Mammary epithelial cell (primary cell): ENCODE measurements at regions of chr9 and their contacts with region 1.

Region 1: DNA sequence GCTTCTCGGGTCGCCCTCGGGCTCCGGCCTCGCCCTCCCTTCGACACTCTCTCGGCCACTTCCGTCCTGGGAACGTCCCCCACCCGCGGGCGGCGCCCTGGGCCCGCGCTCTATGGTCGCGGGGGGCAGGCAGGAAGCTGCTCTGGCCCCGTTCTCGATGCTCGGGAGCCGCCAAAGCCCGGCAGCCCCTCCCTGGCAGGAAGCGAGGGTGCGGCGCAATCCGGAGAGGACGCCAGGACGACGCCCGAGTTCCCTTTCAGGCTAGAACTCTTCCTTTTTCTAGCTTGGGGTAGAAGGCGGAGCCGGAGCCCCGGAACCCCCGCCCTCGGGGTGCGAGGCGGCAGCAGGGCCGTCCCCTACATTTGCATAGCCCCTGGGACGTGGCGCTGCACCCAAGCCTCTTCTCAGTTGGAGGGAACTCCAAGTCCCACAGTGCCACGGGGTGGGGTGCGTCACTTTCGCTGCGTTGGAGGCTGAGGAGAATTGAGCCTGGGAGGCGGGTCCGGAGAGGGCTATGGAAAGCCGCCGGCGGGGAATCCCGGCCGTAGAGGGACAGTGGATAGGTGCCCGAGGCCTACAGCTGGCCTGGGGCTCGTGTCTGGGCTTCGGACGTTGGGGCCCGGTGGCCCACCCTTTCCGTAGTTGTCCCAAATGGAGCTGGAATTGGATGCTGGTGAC is at the starts of genes CREB3 and TLN1:
- DNase-seq: peak; percentile 99
- H3K4me3 ChIP-seq: peak within 1 kb of the TSS; percentile 72 to 88 (median 80)
- H3K27ac ChIP-seq: peak within 1 kb of the TSS; percentile 74
- H3K4me1 ChIP-seq: peaks cover 52% of the 10 kb centered on the region
- H3K27me3 ChIP-seq: no peaks in the 10 kb centered on the region
- CTCF ChIP-seq: no peak
- total RNA-seq, gene CREB3: 45.4 to 60.8 TPM
- total RNA-seq, gene TLN1: 202 to 213 TPM

Region 2: GRCh38 chr9:35646533-35647265 is 85.6 kb before region 1 on chr9:
- CTCF ChIA-PET with region 1: interaction called, 7 read pairs
- dilution Hi-C with region 1: no loop called
- in situ Hi-C with region 1: no loop called
- intact Hi-C with region 1: loop called (anchors 1 kb)
- DNase-seq: peak; percentile 85
- H3K4me3 ChIP-seq: peak overlapping the region; percentile 62 to 95 (median 72)
- H3K27ac ChIP-seq: peak overlapping the region; percentile 85
- H3K4me1 ChIP-seq: peaks cover 6% of the 10 kb centered on the region
- H3K27me3 ChIP-seq: no peaks in the 10 kb centered on the region
- CTCF ChIP-seq: peak; percentile 77 to 98

Region 3: DNA sequence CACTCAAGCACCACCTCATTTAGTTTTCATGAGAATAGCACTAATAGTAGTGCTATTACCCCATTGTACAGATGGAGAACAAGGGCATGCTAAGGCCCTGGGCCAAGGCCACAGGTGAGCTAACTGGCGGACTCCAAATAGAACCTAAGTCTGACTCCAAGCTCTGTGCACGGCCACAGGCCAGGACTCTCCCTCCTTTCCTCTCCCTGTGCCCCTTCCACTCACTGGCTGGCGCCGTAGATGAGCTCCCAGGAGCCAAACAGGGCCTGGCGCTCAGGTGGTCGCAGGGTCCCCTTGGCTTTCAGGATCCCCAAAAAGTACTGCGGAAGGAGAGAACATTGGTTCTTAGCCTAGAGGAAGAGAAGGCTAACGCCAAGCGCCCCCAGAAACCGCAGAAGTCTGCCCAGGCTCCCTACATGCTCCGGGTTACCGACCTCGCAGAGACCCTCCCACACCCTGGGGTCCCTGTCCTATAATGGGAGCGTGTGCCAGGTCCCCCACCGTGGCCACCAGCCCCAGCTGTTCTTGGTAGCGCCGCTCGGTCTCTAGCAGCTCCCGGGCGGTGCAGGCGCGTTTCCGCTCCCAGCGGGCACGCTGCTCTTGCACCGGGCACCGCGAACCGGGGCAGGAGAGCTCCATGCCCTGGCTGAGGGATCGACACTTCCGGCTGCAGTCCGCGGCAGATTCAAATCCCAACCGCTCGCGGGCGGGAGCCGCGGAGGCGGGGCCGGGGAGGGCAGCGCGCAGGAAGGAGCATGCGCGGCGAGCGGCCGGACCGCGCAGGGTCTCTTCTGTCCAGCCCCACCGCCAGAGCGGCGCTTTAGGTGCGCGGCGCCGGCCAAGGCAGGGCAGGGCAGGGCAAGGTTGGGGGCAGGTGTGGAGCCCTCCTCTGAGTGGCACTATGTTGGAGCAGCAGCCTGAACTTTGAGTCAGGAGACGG is 67.5 kb before region 1 on chr9 and contains the start of gene ARHGEF39:
- CTCF ChIA-PET with region 1: interaction called, 10 read pairs
- dilution Hi-C with region 1: no loop called
- in situ Hi-C with region 1: no loop called
- intact Hi-C with region 1: loop called (anchors 2 kb)
- DNase-seq: peak; percentile 79
- H3K4me3 ChIP-seq: peak within 1 kb of the TSS; percentile 32 to 77 (median 63)
- H3K27ac ChIP-seq: peak within 1 kb of the TSS; percentile 50
- H3K4me1 ChIP-seq: peaks cover 39% of the 10 kb centered on the region
- H3K27me3 ChIP-seq: no peaks in the 10 kb centered on the region
- CTCF ChIP-seq: peak in 1 of 2 donors; percentile 16
- total RNA-seq, gene ARHGEF39: 0.33 to 5.7 TPM

Region 4: GRCh38 chr9:35718721-35719511 is 13.3 kb before region 1 on chr9:
- CTCF ChIA-PET with region 1: no interaction called
- dilution Hi-C with region 1: no loop called
- in situ Hi-C with region 1: no loop called
- intact Hi-C with region 1: loop called (anchors 1 kb)
- DNase-seq: peak; percentile 37
- H3K4me3 ChIP-seq: no peak overlapping the region
- H3K27ac ChIP-seq: no peak overlapping the region
- H3K4me1 ChIP-seq: no peaks in the 10 kb centered on the region
- H3K27me3 ChIP-seq: no peaks in the 10 kb centered on the region
- CTCF ChIP-seq: no peak

Region 5: GRCh38 chr9:35756275-35757225 is 24.3 kb after region 1 on chr9:
- CTCF ChIA-PET with region 1: no interaction called
- dilution Hi-C with region 1: loop called (anchors 5 kb)
- in situ Hi-C with region 1: no loop called
- intact Hi-C with region 1: no loop called
- DNase-seq: peak; percentile 23
- H3K4me3 ChIP-seq: peak overlapping the region; percentile 55 to 70 (median 64)
- H3K27ac ChIP-seq: no peak overlapping the region
- H3K4me1 ChIP-seq: peaks cover 24% of the 10 kb centered on the region
- H3K27me3 ChIP-seq: no peaks in the 10 kb centered on the region
- CTCF ChIP-seq: peak; percentile 48 to 77

Region 6: GRCh38 chr9:35790385-35791296 is 58.4 kb after region 1 on chr9:
- CTCF ChIA-PET with region 1: interaction called, 3 read pairs
- dilution Hi-C with region 1: no loop called
- in situ Hi-C with region 1: no loop called
- intact Hi-C with region 1: loop called (anchors 1 kb)
- DNase-seq: peak; percentile 60
- H3K4me3 ChIP-seq: no peak overlapping the region
- H3K27ac ChIP-seq: no peak overlapping the region
- H3K4me1 ChIP-seq: peaks cover 11% of the 10 kb centered on the region
- H3K27me3 ChIP-seq: no peaks in the 10 kb centered on the region
- CTCF ChIP-seq: peak; percentile 83

Region 7: DNA sequence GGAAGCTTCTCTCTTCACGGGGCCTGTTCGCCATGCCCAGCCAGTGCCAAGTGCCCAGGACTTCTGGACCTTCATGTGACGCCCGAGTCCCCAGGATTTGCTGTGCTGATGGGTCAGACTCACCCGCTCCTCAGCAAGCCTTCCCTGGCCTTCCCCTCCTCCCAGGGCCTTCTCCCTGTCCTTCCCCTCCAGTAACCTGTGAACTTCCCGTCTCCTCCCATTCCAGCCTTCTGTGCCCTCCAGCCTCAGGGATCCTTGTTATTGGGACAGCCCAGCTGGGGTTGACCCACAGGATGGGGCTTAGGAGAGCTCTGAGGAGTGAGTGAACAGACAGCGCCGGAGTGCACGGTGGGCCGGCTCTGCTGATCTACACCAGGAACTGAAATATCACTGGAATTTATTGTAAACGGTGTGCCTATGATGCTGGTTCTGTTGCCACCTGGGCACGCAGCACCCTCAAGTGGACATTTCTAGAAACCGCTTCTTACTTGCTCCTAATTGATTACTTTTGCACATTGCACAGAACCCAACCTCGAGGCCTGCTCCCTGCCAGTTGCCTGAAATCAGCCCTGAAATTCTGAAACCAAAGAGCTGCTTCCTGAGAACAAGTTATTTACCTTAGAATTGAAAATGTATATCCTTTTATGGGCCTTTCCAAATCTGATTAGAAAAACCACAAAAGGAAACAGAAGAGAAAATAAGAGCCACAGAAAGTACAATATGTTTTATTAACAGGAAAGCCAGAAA is 178.5 kb after region 1 on chr9:
- CTCF ChIA-PET with region 1: no interaction called
- dilution Hi-C with region 1: no loop called
- in situ Hi-C with region 1: no loop called
- intact Hi-C with region 1: loop called (anchors 5 kb)
- DNase-seq: peak; percentile 56
- H3K4me3 ChIP-seq: no peak overlapping the region
- H3K27ac ChIP-seq: no peak overlapping the region
- H3K4me1 ChIP-seq: peaks cover 50% of the 10 kb centered on the region
- H3K27me3 ChIP-seq: no peaks in the 10 kb centered on the region
- CTCF ChIP-seq: peak; percentile 75 to 79